Adrenal gland (tissue), 19 donors: ENCODE measurements at regions of chr6 and their contacts with region 1.

Region 1: GRCh38 chr6:53171605-53172446 is 23.2 kb upstream of the GCM1 start:
- DNase-seq: peak; percentile 84 to 97 (median 92)
- H3K4me3 ChIP-seq: no peak overlapping the region
- H3K27ac ChIP-seq: no peak overlapping the region
- H3K4me1 ChIP-seq: peaks cover 0 to 18% of the 10 kb centered on the region in 2 donors
- H3K27me3 ChIP-seq: no peaks in the 10 kb centered on the region
- CTCF ChIP-seq: peak; percentile 100
- POLR2A ChIP-seq: peak in 1 of 2 donors; percentile 52

Region 2: DNA sequence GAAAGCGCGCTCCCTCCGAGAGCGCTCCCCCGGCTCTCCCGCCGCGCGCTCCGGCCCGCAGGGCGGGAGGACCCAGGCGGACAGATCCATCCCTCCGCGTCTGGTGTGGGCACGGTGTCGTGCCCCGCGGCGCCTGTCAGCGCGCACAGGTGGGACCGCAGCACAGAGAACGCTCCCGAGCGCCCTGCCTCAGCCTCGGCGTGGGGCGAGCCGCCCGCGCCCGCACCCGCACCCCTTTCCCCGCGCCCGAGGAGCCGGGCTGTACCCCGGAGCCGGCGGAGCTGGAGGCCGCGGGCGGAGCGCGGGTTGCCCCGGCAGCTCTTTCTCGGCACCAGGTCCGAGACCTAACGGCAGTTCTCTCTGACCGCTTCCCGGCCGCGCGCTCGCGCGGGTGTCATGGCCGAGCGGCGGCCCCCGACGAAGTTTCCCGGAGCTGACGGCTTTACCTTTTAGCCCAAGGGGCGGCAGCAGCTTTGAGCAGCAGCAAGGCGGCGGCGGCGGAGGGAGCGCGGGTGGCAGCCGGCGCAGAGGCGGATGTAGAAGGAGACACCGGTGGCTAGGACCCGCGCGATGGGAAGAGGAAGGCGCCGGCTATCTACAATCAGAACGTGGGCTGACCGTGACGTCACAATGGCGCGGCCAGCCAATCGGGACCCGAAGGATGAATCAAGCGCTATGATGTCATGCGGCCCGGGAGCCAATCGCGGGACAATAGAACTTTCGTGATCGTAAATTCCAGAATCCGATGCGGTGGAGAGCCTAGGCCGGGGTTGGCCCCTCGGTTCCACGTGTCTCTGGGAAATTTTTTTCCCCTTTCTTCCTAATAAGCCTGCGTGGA is 176.8 kb after region 1 on chr6 and contains the start of gene ELOVL5:
- intact Hi-C with region 1: loop called in 1 of 2 experiments (anchors 10 kb)
- DNase-seq: peak; percentile 99 to 100 (median 100)
- H3K4me3 ChIP-seq: peak within 1 kb of the TSS; percentile 46 to 87 (median 72)
- H3K27ac ChIP-seq: peak within 1 kb of the TSS; percentile 77 to 100 (median 98)
- H3K4me1 ChIP-seq: peaks cover 5 to 20% of the 10 kb centered on the region in 2 donors
- H3K27me3 ChIP-seq: no peaks in the 10 kb centered on the region
- CTCF ChIP-seq: peak in 2 of 6 experiments; percentile 6 to 21
- POLR2A ChIP-seq: peak; percentile 84 to 93
- total RNA-seq, gene ELOVL5: 103 to 632 (median 167) TPM

Region 3: GRCh38 chr6:53410508-53411258 is 238.9 kb after region 1 on chr6:
- intact Hi-C with region 1: loop called (anchors 5 to 10 kb)
- DNase-seq: peak; percentile 50 to 76 (median 65)
- H3K4me3 ChIP-seq: no peak overlapping the region
- H3K27ac ChIP-seq: no peak overlapping the region
- H3K4me1 ChIP-seq: peaks cover 0 to 5% of the 10 kb centered on the region in 2 donors
- H3K27me3 ChIP-seq: no peaks in the 10 kb centered on the region
- CTCF ChIP-seq: peak; percentile 39 to 81 (median 71)
- POLR2A ChIP-seq: no peak

Region 4: GRCh38 chr6:53484476-53485280 is 312.9 kb after region 1 on chr6:
- intact Hi-C with region 1: loop called (anchors 2 to 5 kb)
- DNase-seq: peak; percentile 61 to 94 (median 86)
- H3K4me3 ChIP-seq: peak overlapping the region in 1 of 4 donors; percentile 0
- H3K27ac ChIP-seq: peak overlapping the region in 2 of 5 donors; percentile 11 to 66
- H3K4me1 ChIP-seq: peaks cover 10 to 22% of the 10 kb centered on the region in 2 donors
- H3K27me3 ChIP-seq: no peaks in the 10 kb centered on the region
- CTCF ChIP-seq: peak; percentile 93 to 99 (median 98)
- POLR2A ChIP-seq: no peak

Region 5: DNA sequence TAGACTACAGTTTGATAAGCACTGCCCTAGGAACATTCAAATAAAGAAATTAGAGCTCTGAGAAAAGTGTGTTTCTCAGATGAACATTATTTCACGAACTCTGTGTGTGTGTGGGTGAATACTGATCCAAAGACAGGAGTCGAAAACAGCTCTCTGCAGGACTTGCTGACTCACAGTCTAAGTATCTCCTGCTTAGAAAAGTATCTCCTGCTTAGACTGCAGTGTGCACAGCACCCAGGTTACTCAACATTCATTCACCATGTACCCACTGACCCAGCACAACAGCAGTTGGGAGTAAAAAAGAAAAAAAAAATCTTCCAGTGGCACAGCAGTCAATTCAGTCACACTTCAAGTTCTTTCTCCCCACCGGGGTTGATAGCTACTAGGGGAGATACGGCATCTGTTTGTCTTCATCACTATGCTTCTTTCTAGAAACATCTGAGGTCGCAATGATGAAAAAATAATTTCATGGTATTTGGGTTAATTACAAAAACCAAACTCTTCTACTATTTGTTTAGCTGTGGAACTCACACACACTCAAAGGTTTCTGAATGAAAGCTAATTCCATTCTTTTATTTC is 325.1 kb after region 1 on chr6:
- intact Hi-C with region 1: no loop called
- DNase-seq: no peak
- H3K4me3 ChIP-seq: no peak overlapping the region
- H3K27ac ChIP-seq: no peak overlapping the region
- H3K4me1 ChIP-seq: peaks cover 0 to 16% of the 10 kb centered on the region in 2 donors
- H3K27me3 ChIP-seq: no peaks in the 10 kb centered on the region
- CTCF ChIP-seq: no peak
- POLR2A ChIP-seq: no peak